Breast epithelium (tissue), 4 donors: ENCODE measurements at regions of chr11 and their contacts with region 1.

Region 1: GRCh38 chr11:215581-216037 is 8.1 kb downstream of the RIC8A start:
- DNase-seq: peak in 1 of 2 donors; percentile 44
- H3K4me3 ChIP-seq: no peak overlapping the region
- H3K27ac ChIP-seq: no peak overlapping the region
- H3K4me1 ChIP-seq: no peaks in the 10 kb centered on the region
- H3K27me3 ChIP-seq: no peaks in the 10 kb centered on the region
- CTCF ChIP-seq: no peak
- POLR2A ChIP-seq: no peak

Region 2: DNA sequence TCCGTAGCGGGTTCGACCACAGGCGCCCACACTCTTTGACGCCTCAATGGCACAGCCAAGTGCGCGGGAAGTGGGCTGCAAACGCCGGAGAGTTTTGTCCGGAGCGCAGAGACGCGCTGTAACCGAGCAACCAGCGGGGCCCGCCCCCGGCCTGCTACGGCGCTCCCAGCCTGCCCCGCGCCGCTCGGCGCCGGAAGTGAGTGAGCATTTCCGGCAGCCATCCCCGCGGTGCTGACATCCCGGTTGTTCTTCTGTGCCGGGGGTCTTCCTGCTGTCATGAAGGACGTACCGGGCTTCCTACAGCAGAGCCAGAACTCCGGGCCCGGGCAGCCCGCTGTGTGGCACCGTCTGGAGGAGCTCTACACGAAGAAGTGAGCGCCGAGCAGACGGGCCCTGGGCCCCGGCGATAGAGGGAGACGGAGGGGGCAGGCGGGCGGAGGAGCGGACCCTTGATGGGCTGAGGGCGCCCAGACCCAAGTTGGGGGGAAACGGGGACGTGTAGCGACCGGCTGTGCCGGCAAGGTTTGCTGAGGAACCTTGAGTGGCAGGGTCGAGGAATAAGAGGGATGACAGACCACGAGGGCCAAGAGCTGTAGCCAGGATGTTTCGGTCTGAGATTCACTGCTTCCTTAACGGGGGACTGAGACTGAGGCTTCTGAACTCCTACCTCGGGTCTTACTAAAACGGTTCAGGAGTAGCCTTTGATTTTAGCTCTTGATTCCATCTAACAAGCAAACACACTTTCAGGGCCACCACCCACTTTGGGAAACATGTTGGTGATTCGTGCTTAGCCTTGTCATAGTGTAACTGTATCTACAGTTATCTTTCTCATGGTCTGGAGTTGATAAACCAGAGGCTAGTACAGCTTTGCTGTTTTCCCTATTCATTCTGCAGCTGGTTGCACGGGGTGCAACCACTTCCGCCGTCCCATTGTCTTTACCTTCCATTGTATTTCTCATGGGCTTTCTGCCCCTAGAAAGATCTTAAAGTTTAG is 21.5 kb after region 1 on chr11 and contains the start of gene PSMD13:
- intact Hi-C with region 1: loop called (anchors 1 kb)
- DNase-seq: peak; percentile 70 to 84
- H3K4me3 ChIP-seq: peak within 1 kb of the TSS; percentile 81 to 99 (median 98)
- H3K27ac ChIP-seq: peak within 1 kb of the TSS; percentile 96 to 98
- H3K4me1 ChIP-seq: peaks cover 3 to 16% of the 10 kb centered on the region in 2 donors
- H3K27me3 ChIP-seq: no peaks in the 10 kb centered on the region
- CTCF ChIP-seq: peak in 1 of 3 donors; percentile 19
- POLR2A ChIP-seq: peak; percentile 53
- total RNA-seq, gene PSMD13: 96.0 to 114 (median 106) TPM

Region 3: GRCh38 chr11:250740-251299 is 35.2 kb after region 1 on chr11:
- intact Hi-C with region 1: no loop called
- DNase-seq: no peak
- H3K4me3 ChIP-seq: no peak overlapping the region
- H3K27ac ChIP-seq: no peak overlapping the region
- H3K4me1 ChIP-seq: no peaks in the 10 kb centered on the region
- H3K27me3 ChIP-seq: no peaks in the 10 kb centered on the region
- CTCF ChIP-seq: peak; percentile 9 to 43 (median 39)
- POLR2A ChIP-seq: no peak

Region 4: DNA sequence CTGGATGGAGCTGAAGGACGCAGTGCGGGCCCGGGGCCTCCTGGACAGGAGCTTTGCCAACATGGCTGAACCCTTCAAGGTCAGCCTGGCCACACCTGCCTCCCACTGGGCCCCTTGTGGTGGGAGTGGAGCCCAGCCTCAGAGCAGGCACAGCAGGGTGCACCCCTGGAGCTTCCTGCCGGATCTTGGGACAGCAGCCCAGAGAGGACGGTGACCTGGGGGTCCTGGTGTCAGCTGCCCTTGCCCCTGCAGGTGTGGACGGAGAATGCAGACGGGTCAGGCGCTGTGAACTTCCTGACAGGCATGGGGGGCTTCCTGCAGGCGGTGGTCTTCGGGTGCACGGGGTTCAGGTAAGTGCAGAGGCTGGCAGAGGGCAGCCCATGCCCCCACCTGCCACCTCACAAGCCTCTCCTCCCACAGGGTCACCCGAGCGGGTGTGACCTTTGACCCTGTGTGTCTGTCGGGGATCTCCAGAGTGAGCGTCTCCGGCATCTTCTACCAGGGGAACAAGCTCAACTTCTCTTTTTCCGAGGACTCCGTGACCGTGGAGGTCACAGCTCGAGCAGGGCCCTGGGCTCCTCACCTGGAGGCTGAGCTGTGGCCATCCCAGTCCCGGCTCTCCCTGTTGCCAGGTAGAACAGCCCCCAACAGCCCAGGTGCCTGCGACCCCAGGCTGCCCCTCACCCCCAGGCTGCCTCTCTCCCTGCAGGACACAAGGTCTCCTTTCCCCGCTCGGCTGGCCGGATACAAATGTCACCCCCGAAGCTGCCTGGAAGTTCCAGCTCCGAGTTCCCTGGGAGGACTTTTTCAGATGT is 78.4 kb after region 1 on chr11:
- intact Hi-C with region 1: loop called (anchors 2 kb)
- DNase-seq: no peak
- H3K4me3 ChIP-seq: no peak overlapping the region
- H3K27ac ChIP-seq: no peak overlapping the region
- H3K4me1 ChIP-seq: no peaks in the 10 kb centered on the region
- H3K27me3 ChIP-seq: peaks cover 0 to 8% of the 10 kb centered on the region in 2 donors
- CTCF ChIP-seq: no peak
- POLR2A ChIP-seq: no peak

Region 5: GRCh38 chr11:568306-569157 is 352.9 kb after region 1 on chr11:
- intact Hi-C with region 1: no loop called
- DNase-seq: peak; percentile 92 to 93
- H3K4me3 ChIP-seq: peak overlapping the region; percentile 53 to 79 (median 65)
- H3K27ac ChIP-seq: peak overlapping the region; percentile 78 to 82
- H3K4me1 ChIP-seq: peaks cover 0 to 7% of the 10 kb centered on the region in 2 donors
- H3K27me3 ChIP-seq: no peaks in the 10 kb centered on the region
- CTCF ChIP-seq: no peak
- POLR2A ChIP-seq: no peak